IMR-90 (cell line): ENCODE measurements at regions of chr5 and their contacts with region 1.

Region 1: GRCh38 chr5:98975682-98976407 is 47.0 kb upstream of the CHD1 start:
- DNase-seq: peak; percentile 5
- ATAC-seq: no peak; the same call in 1 of the 2 replicates
- H3K4me3 ChIP-seq: no peak overlapping the region
- H3K27ac ChIP-seq: no peak overlapping the region
- H3K4me1 ChIP-seq: no peaks in the 10 kb centered on the region
- H3K27me3 ChIP-seq: no peaks in the 10 kb centered on the region
- CTCF ChIP-seq: no peak
- POLR2A ChIP-seq: no peak
- RAD21 ChIP-seq: no peak

Region 2: GRCh38 chr5:97694091-97694490 is 1281.8 kb before region 1 on chr5:
- CTCF ChIA-PET with region 1: no interaction called
- POLR2A ChIA-PET with region 1: no interaction called
- dilution Hi-C with region 1: no loop called
- in situ Hi-C with region 1: no loop called
- intact Hi-C with region 1: no loop called
- DNase-seq: no peak
- ATAC-seq: no peak
- H3K4me3 ChIP-seq: no peak overlapping the region
- H3K27ac ChIP-seq: no peak overlapping the region
- H3K4me1 ChIP-seq: no peaks in the 10 kb centered on the region
- H3K27me3 ChIP-seq: no peaks in the 10 kb centered on the region
- CTCF ChIP-seq: no peak
- POLR2A ChIP-seq: no peak
- RAD21 ChIP-seq: no peak

Region 3: DNA sequence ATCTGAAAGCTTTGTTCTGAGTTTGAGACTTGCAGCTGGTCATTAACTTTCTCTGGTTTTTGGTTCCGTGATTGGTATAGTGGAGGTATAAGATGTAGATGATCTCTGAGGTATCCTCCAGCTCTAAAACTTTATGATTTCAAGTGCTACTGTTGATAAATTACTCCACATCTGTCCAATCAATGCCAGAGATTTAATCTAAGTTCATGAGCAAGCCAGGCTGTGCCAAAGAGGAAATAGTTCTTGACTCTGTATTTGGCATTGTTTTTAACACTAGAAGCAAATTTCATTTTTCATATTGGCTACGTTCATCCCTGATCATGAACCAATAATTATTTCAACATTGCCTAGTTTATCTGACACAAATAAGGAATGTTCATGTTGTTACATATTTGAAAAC is 18.5 kb before region 1 on chr5:
- CTCF ChIA-PET with region 1: no interaction called
- POLR2A ChIA-PET with region 1: interaction called, 11 read pairs
- dilution Hi-C with region 1: no loop called
- in situ Hi-C with region 1: no loop called
- intact Hi-C with region 1: no loop called
- DNase-seq: no peak
- ATAC-seq: no peak
- H3K4me3 ChIP-seq: no peak overlapping the region
- H3K27ac ChIP-seq: no peak overlapping the region
- H3K4me1 ChIP-seq: no peaks in the 10 kb centered on the region
- H3K27me3 ChIP-seq: no peaks in the 10 kb centered on the region
- CTCF ChIP-seq: no peak
- POLR2A ChIP-seq: no peak
- RAD21 ChIP-seq: no peak